ENCODE measurements at regions of chr2 and their contacts with region 1.

Region 1: GRCh38 chr2:189661148-189661956 is at the start of gene ASNSD1:
- DNase-seq: peak; percentile 99
- H3K4me3 ChIP-seq: peak within 1 kb of the TSS; percentile 100
- CTCF ChIP-seq: peak; percentile 74

Region 2: DNA sequence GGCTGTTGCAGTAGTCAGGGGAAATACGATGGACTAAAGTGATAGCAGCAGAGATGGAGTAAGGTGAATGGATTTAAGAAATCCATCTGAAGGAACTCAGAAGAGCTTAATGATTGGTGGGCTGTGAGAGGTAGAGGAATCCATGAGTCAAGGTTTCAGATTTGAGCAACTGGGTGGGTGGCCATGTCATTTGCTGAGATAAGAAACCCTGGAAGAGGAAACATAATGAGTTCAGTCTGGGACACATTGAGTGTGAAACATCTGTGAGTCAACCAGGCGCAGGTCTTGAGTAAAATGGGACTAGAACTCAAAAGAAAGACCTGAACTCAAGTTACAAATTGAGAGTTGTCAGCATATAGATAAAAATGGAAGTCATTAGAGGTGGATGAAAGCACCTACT is 19.8 kb before region 1 on chr2:
- CTCF ChIA-PET with region 1: interaction called, 56 read pairs
- POLR2A ChIA-PET with region 1: no interaction called
- DNase-seq: no peak
- H3K4me3 ChIP-seq: no peak overlapping the region
- CTCF ChIP-seq: no peak

Region 3: GRCh38 chr2:189674374-189675112 is 13.2 kb after region 1 on chr2 and contains the start of gene ANKAR:
- CTCF ChIA-PET with region 1: interaction called, 186 read pairs
- POLR2A ChIA-PET with region 1: interaction called, 5 read pairs
- DNase-seq: peak; percentile 24
- H3K4me3 ChIP-seq: peak within 1 kb of the TSS; percentile 77
- CTCF ChIP-seq: peak; percentile 88

Region 4: GRCh38 chr2:189698020-189698887 is 36.9 kb after region 1 on chr2:
- CTCF ChIA-PET with region 1: interaction called, 122 read pairs
- POLR2A ChIA-PET with region 1: no interaction called
- DNase-seq: no peak
- H3K4me3 ChIP-seq: no peak overlapping the region
- CTCF ChIP-seq: peak; percentile 11

Region 5: GRCh38 chr2:189762551-189763298 is 101.4 kb after region 1 on chr2 and contains the start of gene OSGEPL1:
- CTCF ChIA-PET with region 1: interaction called, 39 read pairs
- POLR2A ChIA-PET with region 1: interaction called, 3 read pairs
- DNase-seq: no peak
- H3K4me3 ChIP-seq: peak within 1 kb of the TSS; percentile 93
- CTCF ChIP-seq: peak; percentile 72

Region 6: DNA sequence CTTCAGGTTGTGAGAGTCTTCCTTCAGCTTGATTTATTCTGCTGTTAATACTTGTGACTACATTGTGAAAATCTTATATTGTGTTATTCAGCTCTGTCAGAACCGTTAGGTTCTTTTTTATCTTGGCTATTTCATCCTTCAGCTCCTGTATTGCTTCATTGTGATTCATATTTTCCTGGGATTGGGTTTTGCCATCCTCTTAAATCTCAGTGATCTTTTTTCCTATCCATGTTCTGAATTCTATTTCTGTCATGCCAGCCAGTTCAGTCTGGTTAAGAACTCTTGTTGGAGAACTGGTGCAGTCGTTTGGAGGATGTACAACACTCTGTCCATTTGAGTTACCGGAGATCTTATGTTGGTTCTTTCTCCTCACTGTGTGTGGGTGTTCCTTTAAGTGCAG is 382.1 kb after region 1 on chr2:
- CTCF ChIA-PET with region 1: no interaction called
- POLR2A ChIA-PET with region 1: no interaction called
- DNase-seq: no peak
- H3K4me3 ChIP-seq: no peak overlapping the region
- CTCF ChIP-seq: no peak

Measured in AG04449 (cell line).